ENCODE measurements at regions of chr17 and their contacts with region 1.

Region 1: GRCh38 chr17:52594516-52594915 is 436.0 kb upstream of the CA10 start:
- DNase-seq: no peak

Region 2: DNA sequence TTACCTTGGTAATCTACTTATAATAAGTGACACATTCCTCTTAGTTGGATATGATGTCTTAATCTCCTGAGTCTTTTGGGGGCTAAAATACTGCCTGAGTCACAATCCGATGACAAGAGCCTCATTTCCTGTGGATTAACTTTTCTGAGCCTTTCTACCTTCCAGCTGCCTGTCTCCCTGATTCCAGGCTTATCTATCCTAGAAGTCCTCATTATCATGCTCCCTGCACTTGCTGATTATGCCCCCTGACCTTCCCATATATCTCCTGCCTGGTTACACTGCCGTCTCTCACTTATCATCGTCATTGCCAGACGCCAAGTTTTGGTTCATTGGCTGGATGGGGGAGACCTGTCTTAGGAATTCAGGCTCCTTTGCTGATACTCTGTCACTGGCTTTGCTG is 291.4 kb after region 1 on chr17:
- intact Hi-C with region 1: no loop called
- DNase-seq: no peak

Region 3: DNA sequence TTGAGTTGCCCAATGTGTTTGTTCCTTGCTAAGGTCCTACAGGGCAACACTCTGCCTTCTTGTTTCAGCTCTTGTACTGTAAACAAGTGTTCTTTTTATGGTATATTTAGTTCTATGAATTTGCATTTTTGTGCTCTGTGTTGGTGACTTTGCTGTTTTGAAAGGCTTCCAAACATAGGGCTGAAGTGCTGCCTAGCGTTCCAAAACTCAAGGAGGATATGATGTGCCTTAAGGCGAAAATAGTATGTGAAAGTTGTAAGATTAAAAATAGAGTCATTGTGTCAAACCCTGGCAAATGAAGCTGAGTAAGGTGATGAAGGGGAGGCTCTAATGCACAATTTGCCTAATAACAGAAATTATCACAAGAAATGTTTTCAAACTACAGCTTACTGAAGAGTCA is 1933.4 kb after region 1 on chr17:
- intact Hi-C with region 1: loop called in 1 of 2 experiments (anchors 10 kb)
- DNase-seq: no peak

Measured in posterior vena cava (tissue), 2 donors.